ENCODE measurements at regions of chr11 and their contacts with region 1.

Region 1: DNA sequence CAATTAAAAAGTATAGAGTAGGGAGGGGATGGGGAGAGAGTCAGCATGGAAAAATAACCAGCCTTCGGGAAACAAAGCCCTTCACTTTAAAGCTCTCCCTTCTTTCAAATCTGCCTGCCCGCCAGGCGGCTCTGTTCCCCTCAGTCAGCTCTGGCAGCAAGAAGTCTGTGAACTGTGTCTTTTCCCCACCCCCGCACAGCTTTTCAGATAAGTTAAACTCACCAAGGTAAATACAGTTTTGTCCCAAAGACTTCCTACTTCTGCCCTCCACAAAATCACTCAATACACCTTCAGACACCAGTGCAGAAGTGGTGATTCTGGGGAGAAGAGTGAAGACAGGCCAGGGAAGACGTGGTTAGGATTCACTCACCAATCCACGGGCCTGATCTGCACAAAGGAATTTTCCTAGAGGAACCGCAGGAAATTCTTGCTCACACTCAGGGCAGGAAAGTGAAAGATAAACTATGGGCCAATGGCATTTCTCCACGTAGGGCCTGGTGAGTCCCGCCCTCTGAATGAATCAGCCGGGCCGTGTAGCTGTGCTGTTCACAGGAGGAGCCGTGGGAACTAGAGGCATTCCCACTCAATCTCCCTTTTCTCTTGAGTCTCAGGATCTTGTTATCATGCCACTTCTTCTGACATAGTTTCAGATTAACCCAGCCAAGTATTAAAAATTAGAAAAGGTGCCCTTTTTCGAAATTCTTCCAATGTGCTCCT is at the start of gene TRIM5:
- DNase-seq: peak; percentile 93 to 96 (median 94)
- H3K4me3 ChIP-seq: peak within 1 kb of the TSS; percentile 27 to 98 (median 87)
- H3K27ac ChIP-seq: peak within 1 kb of the TSS; percentile 97 to 99
- H3K4me1 ChIP-seq: peaks cover 9 to 24% (median 17%) of the 10 kb centered on the region in 4 experiments
- H3K27me3 ChIP-seq: no peaks in the 10 kb centered on the region

Region 2: DNA sequence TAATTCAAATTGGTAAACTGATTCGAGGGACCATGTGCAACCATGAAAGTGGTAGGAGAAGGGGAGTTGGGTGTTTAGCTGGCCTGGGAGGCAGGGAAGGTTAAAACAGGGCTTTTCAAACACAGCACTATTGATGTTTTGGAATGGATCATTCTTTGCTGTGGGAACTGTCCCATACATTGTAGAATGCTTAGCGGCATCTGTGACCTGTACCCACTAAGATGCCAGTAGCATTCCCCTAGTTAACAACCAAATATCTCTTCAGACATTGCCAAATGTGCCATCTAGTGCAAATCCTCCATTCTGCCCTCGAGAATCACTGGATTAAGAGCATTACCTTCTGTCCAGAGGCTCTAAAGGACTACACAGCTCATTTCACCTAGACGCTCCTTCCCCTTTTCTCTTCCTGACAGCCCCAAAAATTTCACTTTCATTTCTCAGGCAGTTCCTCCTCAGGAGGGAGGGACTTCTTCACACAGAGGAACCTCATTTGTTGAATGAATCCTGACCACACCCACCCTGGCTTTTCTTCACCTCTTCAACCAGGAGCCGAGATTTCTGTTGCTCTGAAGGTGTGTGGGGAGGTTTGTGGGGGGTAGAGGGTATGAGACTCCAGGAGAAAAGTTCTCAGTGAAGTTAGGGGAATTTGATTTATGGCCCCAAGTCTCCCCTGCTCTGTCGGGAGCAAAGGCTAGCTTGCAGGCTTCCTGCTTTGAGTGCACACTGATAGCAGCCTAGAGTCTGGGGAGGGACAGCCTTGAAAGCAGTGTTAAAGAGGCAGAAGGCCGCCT is 60.1 kb before region 1 on chr11 and contains the start of gene TRIM34:
- CTCF ChIA-PET with region 1: no interaction called
- POLR2A ChIA-PET with region 1: no interaction called
- DNase-seq: peak; percentile 82 to 94 (median 91)
- H3K4me3 ChIP-seq: peak within 1 kb of the TSS; percentile 65 to 87 (median 83)
- H3K27ac ChIP-seq: peak within 1 kb of the TSS; percentile 77 to 82
- H3K4me1 ChIP-seq: peaks cover 7 to 32% (median 25%) of the 10 kb centered on the region in 4 experiments
- H3K27me3 ChIP-seq: no peaks in the 10 kb centered on the region

Region 3: GRCh38 chr11:5700421-5701054 is 15.7 kb after region 1 on chr11:
- CTCF ChIA-PET with region 1: interaction called, 13 read pairs
- POLR2A ChIA-PET with region 1: interaction called, 7 read pairs
- DNase-seq: peak in 2 of 3 donors; percentile 55 to 63
- H3K4me3 ChIP-seq: peak overlapping the region in 2 of 7 experiments; percentile 33 to 36
- H3K27ac ChIP-seq: no peak overlapping the region
- H3K4me1 ChIP-seq: no peaks in the 10 kb centered on the region
- H3K27me3 ChIP-seq: no peaks in the 10 kb centered on the region

Region 4: GRCh38 chr11:5712507-5712906 is 27.7 kb after region 1 on chr11:
- CTCF ChIA-PET with region 1: interaction called, 14 read pairs
- POLR2A ChIA-PET with region 1: no interaction called
- DNase-seq: peak in 2 of 3 donors; percentile 42 to 57
- H3K4me3 ChIP-seq: no peak overlapping the region
- H3K27ac ChIP-seq: no peak overlapping the region
- H3K4me1 ChIP-seq: peaks cover 0 to 14% (median 12%) of the 10 kb centered on the region in 4 experiments
- H3K27me3 ChIP-seq: no peaks in the 10 kb centered on the region

Region 5: DNA sequence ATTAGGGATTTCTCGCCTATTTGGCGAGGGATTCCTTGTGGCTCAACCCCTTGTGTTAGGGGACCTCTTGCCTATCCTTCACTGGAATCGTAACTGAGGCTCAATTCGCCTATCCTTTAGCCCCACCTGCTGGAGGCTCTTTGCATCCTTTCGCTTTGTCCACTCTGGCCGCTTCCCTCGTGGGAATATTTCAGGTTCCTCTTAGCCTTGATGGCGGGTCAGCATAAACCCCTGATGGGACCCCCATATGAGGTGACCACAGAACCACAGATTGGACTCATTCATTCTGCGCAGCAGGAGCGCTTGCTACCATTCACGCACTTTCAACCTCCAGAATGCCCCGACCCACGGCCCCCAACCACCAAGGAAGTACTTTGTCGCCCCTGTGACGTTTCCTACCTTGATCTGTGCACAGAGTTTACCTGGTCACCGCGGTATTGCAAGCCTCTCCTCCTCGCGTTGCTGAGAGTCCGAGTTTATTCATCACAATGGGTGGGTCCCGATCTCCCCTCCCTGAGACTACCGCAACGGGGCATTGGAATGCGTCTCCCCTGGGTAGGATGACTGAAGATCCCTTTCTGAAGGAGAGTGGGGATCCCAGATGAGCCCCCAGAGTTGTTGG is 123.8 kb after region 1 on chr11 and contains the start of gene OR52N2:
- CTCF ChIA-PET with region 1: interaction called, 17 read pairs
- POLR2A ChIA-PET with region 1: interaction called, 4 read pairs
- DNase-seq: peak; percentile 80 to 85 (median 83)
- H3K4me3 ChIP-seq: peak within 1 kb of the TSS; percentile 79 to 98 (median 89)
- H3K27ac ChIP-seq: peak within 1 kb of the TSS; percentile 46 to 75
- H3K4me1 ChIP-seq: peaks cover 3 to 31% (median 13%) of the 10 kb centered on the region in 4 experiments
- H3K27me3 ChIP-seq: no peaks in the 10 kb centered on the region

Region 6: GRCh38 chr11:5891216-5891800 is 206.5 kb after region 1 on chr11:
- CTCF ChIA-PET with region 1: interaction called, 12 read pairs
- POLR2A ChIA-PET with region 1: no interaction called
- DNase-seq: peak; percentile 48 to 66 (median 61)
- H3K4me3 ChIP-seq: no peak overlapping the region
- H3K27ac ChIP-seq: no peak overlapping the region
- H3K4me1 ChIP-seq: no peaks in the 10 kb centered on the region
- H3K27me3 ChIP-seq: no peaks in the 10 kb centered on the region